Activated CD4-positive, alpha-beta memory T cell treated with anti-CD3 and anti-CD28 coated beads for 36 hours (primary cell): ENCODE measurements at regions of chr10 and their contacts with region 1.

Region 1: GRCh38 chr10:88835096-88835909 is 16.3 kb downstream of the ANKRD22 start:
- DNase-seq: peak; percentile 92
- H3K4me3 Mint-ChIP-seq: no peak overlapping the region
- H3K27ac Mint-ChIP-seq: no peak overlapping the region
- H3K4me1 Mint-ChIP-seq: peaks cover 28% of the 10 kb centered on the region
- H3K27me3 Mint-ChIP-seq: no peaks in the 10 kb centered on the region

Region 2: DNA sequence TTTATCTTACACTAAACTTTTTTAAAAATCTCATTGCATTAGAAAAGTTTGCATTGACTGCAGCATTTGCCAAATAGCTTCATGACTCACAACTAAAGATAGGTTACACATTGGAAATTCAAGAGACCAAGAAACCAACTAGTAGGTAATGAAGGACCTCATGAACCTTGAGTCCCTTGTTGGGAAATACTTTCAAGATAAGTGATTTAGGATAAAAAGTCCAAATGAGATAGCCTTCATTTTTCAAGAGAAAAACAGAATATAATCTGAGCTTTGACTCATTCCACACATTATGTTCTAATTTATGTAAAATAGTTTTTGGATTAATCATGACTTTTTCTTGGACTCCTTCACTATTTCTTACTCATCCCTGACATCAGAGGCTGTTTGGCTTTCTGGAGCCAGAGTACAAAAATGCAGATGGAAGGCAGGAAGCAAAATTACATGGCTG is 184.2 kb before region 1 on chr10:
- CTCF ChIA-PET with region 1: no interaction called
- POLR2A ChIA-PET with region 1: no interaction called
- intact Hi-C with region 1: no loop called
- DNase-seq: no peak
- H3K4me3 Mint-ChIP-seq: no peak overlapping the region
- H3K27ac Mint-ChIP-seq: no peak overlapping the region
- H3K4me1 Mint-ChIP-seq: no peaks in the 10 kb centered on the region
- H3K27me3 Mint-ChIP-seq: peaks cover 7% of the 10 kb centered on the region

Region 3: GRCh38 chr10:88820748-88821389 is 14.4 kb before region 1 on chr10:
- CTCF ChIA-PET with region 1: interaction called, 16 read pairs
- POLR2A ChIA-PET with region 1: no interaction called
- intact Hi-C with region 1: no loop called
- DNase-seq: no peak
- H3K4me3 Mint-ChIP-seq: no peak overlapping the region
- H3K27ac Mint-ChIP-seq: no peak overlapping the region
- H3K4me1 Mint-ChIP-seq: peaks cover 20% of the 10 kb centered on the region
- H3K27me3 Mint-ChIP-seq: no peaks in the 10 kb centered on the region

Region 4: GRCh38 chr10:88865281-88865876 is 30.1 kb after region 1 on chr10:
- CTCF ChIA-PET with region 1: interaction called, 13 read pairs
- POLR2A ChIA-PET with region 1: no interaction called
- intact Hi-C with region 1: loop called (anchors 1 kb)
- DNase-seq: no peak
- H3K4me3 Mint-ChIP-seq: no peak overlapping the region
- H3K27ac Mint-ChIP-seq: no peak overlapping the region
- H3K4me1 Mint-ChIP-seq: no peaks in the 10 kb centered on the region
- H3K27me3 Mint-ChIP-seq: peaks cover 5% of the 10 kb centered on the region

Region 5: GRCh38 chr10:88886557-88886956 is 51.3 kb after region 1 on chr10:
- CTCF ChIA-PET with region 1: interaction called, 19 read pairs
- POLR2A ChIA-PET with region 1: interaction called, 5 read pairs
- intact Hi-C with region 1: no loop called
- DNase-seq: peak; percentile 45
- H3K4me3 Mint-ChIP-seq: no peak overlapping the region
- H3K27ac Mint-ChIP-seq: no peak overlapping the region
- H3K4me1 Mint-ChIP-seq: peaks cover 83% of the 10 kb centered on the region
- H3K27me3 Mint-ChIP-seq: no peaks in the 10 kb centered on the region

Region 6: GRCh38 chr10:88908194-88908593 is 72.9 kb after region 1 on chr10:
- CTCF ChIA-PET with region 1: interaction called, 15 read pairs
- POLR2A ChIA-PET with region 1: no interaction called
- intact Hi-C with region 1: no loop called
- DNase-seq: no peak
- H3K4me3 Mint-ChIP-seq: no peak overlapping the region
- H3K27ac Mint-ChIP-seq: peak overlapping the region; percentile 10
- H3K4me1 Mint-ChIP-seq: peaks cover 12% of the 10 kb centered on the region
- H3K27me3 Mint-ChIP-seq: no peaks in the 10 kb centered on the region

Region 7: GRCh38 chr10:88990384-88991160 is 155.3 kb after region 1 on chr10 and contains the start of gene FAS:
- CTCF ChIA-PET with region 1: interaction called, 10 read pairs
- POLR2A ChIA-PET with region 1: interaction called, 3 read pairs
- intact Hi-C with region 1: no loop called
- DNase-seq: peak; percentile 94
- H3K4me3 Mint-ChIP-seq: peak within 1 kb of the TSS; percentile 86
- H3K27ac Mint-ChIP-seq: peak within 1 kb of the TSS; percentile 96
- H3K4me1 Mint-ChIP-seq: peaks cover 65% of the 10 kb centered on the region
- H3K27me3 Mint-ChIP-seq: no peaks in the 10 kb centered on the region
- total RNA-seq, gene FAS: 62.2 to 63.5 TPM